ENCODE measurements at regions of chr7 and their contacts with region 1.

Region 1: DNA sequence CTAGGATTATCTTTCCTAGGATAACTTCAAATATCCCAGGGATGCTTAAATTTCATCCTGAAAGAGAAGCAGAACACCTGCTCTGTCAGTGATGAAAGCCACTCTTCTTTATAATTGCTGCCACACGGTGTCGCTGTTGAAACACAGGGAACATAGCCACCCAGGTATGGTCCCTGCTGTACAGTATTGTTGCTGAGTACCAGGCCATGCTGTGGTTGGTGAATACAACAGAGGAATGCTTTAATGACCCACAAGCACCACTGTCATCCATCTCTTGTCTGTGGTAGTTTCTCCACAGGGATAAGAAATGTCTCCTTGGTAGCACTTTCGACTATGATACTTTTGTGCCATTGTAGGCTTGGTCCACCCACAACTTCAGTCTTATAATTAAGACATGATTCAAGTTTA is 70.6 kb upstream of the STARD3NL start:
- DNase-seq: peak; percentile 45 to 68 (median 55)
- ATAC-seq: peak; percentile 91 to 96 (median 94)
- H3K4me3 ChIP-seq: no peak overlapping the region
- H3K27ac ChIP-seq: no peak overlapping the region
- H3K4me1 ChIP-seq: no peaks in the 10 kb centered on the region
- H3K27me3 ChIP-seq: no peaks in the 10 kb centered on the region
- CTCF ChIP-seq: peak; percentile 73 to 84 (median 80)
- POLR2A ChIP-seq: no peak

Region 2: GRCh38 chr7:37916673-37917660 is 190.5 kb before region 1 on chr7 and contains the start of gene SFRP4:
- intact Hi-C with region 1: loop called in 1 of 2 experiments (anchors 10 kb)
- DNase-seq: peak; percentile 57 to 60 (median 60)
- ATAC-seq: peak; percentile 63 to 69 (median 66)
- H3K4me3 ChIP-seq: peak within 1 kb of the TSS; percentile 46 to 59 (median 46)
- H3K27ac ChIP-seq: no peak within 1 kb of the TSS
- H3K4me1 ChIP-seq: peaks cover 0 to 12% (median 3%) of the 10 kb centered on the region in 4 donors
- H3K27me3 ChIP-seq: no peaks in the 10 kb centered on the region
- CTCF ChIP-seq: peak; percentile 61 to 71 (median 62)
- POLR2A ChIP-seq: no peak
- total RNA-seq, gene SFRP4: 0.15 to 0.46 (median 0.37) TPM in 5 of 6 experiments, not detected in the other

Region 3: DNA sequence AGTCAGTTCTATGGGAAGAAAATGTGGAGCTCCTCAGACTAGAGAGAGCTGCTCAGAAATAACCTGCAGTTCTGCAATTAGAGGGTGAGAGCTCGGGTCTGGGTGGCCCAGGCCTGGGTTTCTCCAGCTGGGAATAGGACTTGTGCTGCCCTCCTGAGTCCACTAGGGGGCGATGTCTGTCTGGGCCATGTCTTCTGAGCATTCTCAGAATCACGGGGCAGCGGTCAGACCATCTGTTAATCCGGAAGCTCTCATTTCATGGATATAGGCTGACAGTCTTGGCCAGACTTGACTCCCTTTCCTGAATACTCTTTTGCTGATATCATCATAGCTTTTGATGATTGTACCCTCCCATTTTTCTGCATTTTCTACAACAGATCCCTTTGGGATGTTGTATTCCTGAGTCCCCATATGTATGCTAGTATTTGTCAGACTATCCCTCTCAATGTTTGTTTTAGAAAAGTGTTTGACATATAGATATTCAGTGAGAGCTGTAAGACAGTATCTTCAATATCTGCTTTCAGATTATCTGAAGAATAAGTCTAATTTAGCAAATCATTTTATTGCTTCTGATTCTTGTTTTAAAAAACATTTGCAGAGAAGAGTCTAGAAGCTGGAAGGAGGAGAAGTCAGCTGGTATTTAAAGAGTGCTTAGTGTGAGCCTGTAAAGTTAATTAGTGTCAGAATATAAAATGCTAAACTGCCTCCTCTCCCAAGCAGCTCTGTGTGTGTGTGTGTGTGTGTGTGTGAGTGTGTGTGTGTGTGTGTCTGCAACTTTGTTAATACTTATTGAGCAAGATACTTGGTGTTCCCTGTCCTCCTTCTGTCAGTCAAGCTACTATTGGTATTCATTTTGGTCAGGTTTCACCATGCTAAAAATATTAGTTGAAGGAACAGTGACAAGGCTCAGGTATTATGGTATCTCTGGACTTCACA is 108.5 kb after region 1 on chr7:
- intact Hi-C with region 1: loop called (anchors 10 kb)
- DNase-seq: peak; percentile 67 to 75 (median 71)
- ATAC-seq: peak; percentile 90 to 96 (median 94)
- H3K4me3 ChIP-seq: no peak overlapping the region
- H3K27ac ChIP-seq: no peak overlapping the region
- H3K4me1 ChIP-seq: peaks cover 0 to 7% (median 4%) of the 10 kb centered on the region in 4 donors
- H3K27me3 ChIP-seq: no peaks in the 10 kb centered on the region
- CTCF ChIP-seq: peak; percentile 72 to 91 (median 89)
- POLR2A ChIP-seq: no peak

Region 4: GRCh38 chr7:38222481-38223096 is 115.1 kb after region 1 on chr7:
- intact Hi-C with region 1: loop called (anchors 10 kb)
- DNase-seq: no peak
- ATAC-seq: peak; percentile 91 to 97 (median 92)
- H3K4me3 ChIP-seq: no peak overlapping the region
- H3K27ac ChIP-seq: no peak overlapping the region
- H3K4me1 ChIP-seq: no peaks in the 10 kb centered on the region
- H3K27me3 ChIP-seq: no peaks in the 10 kb centered on the region
- CTCF ChIP-seq: peak; percentile 88 to 93 (median 91)
- POLR2A ChIP-seq: no peak

Region 5: DNA sequence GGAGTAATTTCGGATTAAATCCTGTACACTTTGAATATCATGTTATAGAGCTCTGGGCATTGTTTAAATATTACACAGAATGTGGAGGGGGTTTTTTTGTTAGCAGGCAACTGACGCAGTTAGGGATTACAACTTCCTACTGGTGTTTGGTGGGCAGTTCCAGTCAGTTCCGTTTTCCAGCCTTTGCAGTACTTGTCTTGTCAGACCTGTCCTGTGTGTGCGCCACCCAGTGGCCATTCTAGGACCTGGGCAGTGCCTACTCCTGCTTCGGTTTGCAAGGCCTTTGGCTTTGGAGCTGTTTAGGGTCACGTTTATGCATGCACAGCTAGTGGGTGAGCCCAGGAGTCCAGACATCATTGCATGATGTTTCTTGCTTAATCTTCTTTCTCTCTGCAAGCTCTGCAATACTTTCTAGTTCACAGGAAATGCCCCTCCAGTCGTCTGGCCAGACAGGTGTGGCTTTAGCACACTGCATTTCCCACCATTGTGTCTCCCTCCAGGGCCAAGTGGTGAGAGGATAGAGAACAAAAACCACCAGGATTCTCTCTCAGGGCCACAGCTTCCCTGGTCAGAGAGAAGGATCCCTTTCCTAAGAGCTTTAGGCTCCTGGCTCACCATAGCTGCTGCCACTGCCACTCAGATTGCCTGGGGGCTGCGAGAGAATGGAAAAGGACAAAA is 262.5 kb after region 1 on chr7:
- intact Hi-C with region 1: loop called in 1 of 2 experiments (anchors 5 kb)
- DNase-seq: peak; percentile 87 to 91 (median 90)
- ATAC-seq: peak; percentile 94 to 97 (median 96)
- H3K4me3 ChIP-seq: no peak overlapping the region
- H3K27ac ChIP-seq: no peak overlapping the region
- H3K4me1 ChIP-seq: no peaks in the 10 kb centered on the region
- H3K27me3 ChIP-seq: no peaks in the 10 kb centered on the region
- CTCF ChIP-seq: peak; percentile 58 to 89 (median 88)
- POLR2A ChIP-seq: no peak